ENCODE measurements at regions of chr3 and their contacts with region 1.

Region 1: GRCh38 chr3:29384640-29385039 is 103.8 kb downstream of the RBMS3 start:
- DNase-seq: peak; percentile 47 to 52
- ATAC-seq: peak; percentile 76
- H3K4me3 ChIP-seq: no peak overlapping the region
- H3K27ac ChIP-seq: peak overlapping the region; percentile 83 to 92
- H3K4me1 ChIP-seq: peaks cover 5 to 8% of the 10 kb centered on the region in 2 donors
- H3K27me3 ChIP-seq: no peaks in the 10 kb centered on the region

Region 2: GRCh38 chr3:29335438-29335837 is 49.2 kb before region 1 on chr3:
- intact Hi-C with region 1: loop called (anchors 5 kb)
- DNase-seq: peak; percentile 81 to 91
- ATAC-seq: peak; percentile 82
- H3K4me3 ChIP-seq: peak overlapping the region; percentile 39 to 90
- H3K27ac ChIP-seq: peak overlapping the region; percentile 40 to 90
- H3K4me1 ChIP-seq: peaks cover 4 to 7% of the 10 kb centered on the region in 2 donors
- H3K27me3 ChIP-seq: no peaks in the 10 kb centered on the region

Region 3: DNA sequence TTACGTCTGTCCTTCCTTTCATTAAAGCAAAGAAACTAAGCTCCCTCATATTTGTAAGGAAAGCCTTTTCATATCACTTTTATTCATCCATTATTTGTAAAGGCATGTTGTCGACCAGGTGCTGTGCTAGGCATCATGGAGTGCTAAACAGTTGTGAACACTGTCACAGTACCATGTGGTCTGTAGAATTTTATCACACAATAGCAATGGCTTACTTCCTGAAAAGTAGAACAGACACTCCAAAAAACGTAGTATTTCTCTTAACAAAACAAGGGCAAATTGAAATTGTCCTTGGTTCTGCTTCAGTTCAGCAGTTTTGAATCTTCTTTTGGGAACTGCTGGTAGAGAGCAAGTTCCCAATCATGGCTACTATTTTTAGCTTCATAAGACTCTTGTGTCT is 40.5 kb before region 1 on chr3:
- intact Hi-C with region 1: loop called (anchors 5 kb)
- DNase-seq: no peak
- ATAC-seq: no peak
- H3K4me3 ChIP-seq: no peak overlapping the region
- H3K27ac ChIP-seq: no peak overlapping the region
- H3K4me1 ChIP-seq: peaks cover under 1 to 6% of the 10 kb centered on the region in 2 donors
- H3K27me3 ChIP-seq: no peaks in the 10 kb centered on the region

Region 4: DNA sequence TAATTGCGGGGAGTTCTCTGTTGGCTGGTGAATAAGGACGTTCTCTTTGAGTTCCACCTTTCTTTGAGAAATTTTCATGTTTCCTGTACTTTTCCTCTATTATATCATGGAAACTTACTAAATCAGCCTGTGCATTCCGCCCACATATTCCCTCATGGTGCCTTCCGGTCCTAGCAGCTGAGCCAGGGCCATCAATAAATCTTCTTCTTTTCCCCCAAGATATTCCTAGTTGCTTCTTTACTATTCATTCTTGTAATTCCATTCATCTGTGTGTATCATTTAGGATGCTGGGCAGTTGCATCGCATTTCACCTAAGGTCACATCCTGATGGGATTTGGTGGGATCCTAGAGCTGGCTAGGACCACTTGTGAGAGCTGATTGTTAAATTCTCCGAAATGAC is 35.5 kb after region 1 on chr3:
- intact Hi-C with region 1: loop called in 1 of 2 experiments (anchors 5 kb)
- DNase-seq: no peak
- ATAC-seq: no peak
- H3K4me3 ChIP-seq: no peak overlapping the region
- H3K27ac ChIP-seq: no peak overlapping the region
- H3K4me1 ChIP-seq: peaks cover 0 to 6% of the 10 kb centered on the region in 2 donors
- H3K27me3 ChIP-seq: no peaks in the 10 kb centered on the region

Region 5: DNA sequence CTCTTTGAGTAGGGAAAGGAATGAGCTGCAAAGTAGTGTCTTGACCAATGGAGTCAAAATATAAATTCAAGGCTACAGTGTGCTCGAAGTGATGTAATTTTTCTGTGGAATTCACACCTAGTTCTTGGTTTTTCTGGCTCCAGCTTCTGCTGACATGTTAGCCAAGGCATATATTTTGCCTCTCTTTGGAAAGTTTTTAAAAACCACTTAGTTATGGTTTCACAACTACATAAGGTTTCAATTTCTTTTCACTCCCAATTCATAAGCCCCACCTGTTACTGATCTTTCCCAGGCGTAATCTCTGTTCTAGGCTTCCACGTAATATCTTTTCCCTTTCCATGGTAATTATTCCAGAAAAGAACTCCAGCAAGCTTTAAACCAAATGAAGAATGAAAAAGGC is 1463.0 kb after region 1 on chr3:
- intact Hi-C with region 1: no loop called
- DNase-seq: no peak
- ATAC-seq: no peak
- H3K4me3 ChIP-seq: no peak overlapping the region
- H3K27ac ChIP-seq: no peak overlapping the region
- H3K4me1 ChIP-seq: no peaks in the 10 kb centered on the region
- H3K27me3 ChIP-seq: no peaks in the 10 kb centered on the region

Measured in aorta (tissue), 5 donors.